GM12878 (cell line): ENCODE measurements at regions of chr6 and their contacts with region 1.

Region 1: GRCh38 chr6:26270903-26271667 is 93.9 kb upstream of the BTN3A2 start:
- DNase-seq: peak; percentile 98
- ATAC-seq: peak; percentile 57
- H3K4me3 ChIP-seq: peak overlapping the region; percentile 72
- H3K27ac ChIP-seq: peak overlapping the region; percentile 96
- H3K4me1 ChIP-seq: peaks cover 3% of the 10 kb centered on the region
- H3K27me3 ChIP-seq: no peaks in the 10 kb centered on the region
- CTCF ChIP-seq: no peak
- EP300 ChIP-seq: no peak
- POLR2A ChIP-seq: peak; percentile 95
- RAD21 ChIP-seq: no peak

Region 2: DNA sequence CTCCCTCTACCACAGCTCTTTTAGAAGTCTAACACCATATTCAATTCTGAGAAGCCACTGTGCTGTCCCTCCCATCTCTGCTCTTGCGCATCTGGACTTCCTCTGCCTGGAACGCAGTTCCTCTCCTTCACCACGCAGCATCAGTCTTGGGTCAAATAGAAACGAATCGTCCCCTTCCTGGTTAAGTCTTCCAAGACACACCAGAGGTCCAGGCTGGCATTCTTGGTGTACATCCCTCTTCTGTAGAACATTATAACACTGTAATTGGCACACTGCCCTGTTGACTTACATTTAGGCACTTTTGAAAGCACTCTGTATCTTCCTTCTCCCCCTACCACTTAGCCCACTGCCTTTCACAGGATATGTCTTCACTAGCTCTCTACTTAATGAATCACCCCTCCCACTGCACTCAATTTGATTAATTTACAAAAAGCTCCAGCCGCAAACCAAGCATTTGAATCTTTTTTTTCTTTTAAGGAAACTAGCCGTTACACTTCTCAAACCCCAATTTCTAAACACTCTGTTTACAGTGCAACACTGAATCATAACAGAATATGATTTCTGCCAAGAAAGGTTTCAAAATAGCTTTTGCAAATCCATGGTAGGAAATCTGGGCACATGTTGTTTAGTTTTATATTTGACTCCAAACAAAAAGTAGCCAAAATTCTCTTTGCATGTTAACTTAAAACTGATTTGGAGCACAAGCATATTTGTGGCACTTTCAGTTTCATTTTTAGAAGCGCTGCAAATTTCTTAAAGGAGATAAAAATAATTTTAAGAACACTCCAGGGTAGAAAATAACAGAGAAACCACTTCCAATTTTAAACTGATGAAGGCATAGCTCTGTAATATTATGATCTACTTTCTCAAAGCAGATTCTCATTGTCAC is 1132.6 kb before region 1 on chr6:
- CTCF ChIA-PET with region 1: no interaction called
- POLR2A ChIA-PET with region 1: no interaction called
- RAD21 ChIA-PET with region 1: no interaction called
- SMC1A ChIA-PET with region 1: no interaction called
- in situ Hi-C with region 1: no loop called
- intact Hi-C with region 1: no loop called
- DNase-seq: peak; percentile 81
- ATAC-seq: peak; percentile 95
- H3K4me3 ChIP-seq: peak overlapping the region; percentile 74
- H3K27ac ChIP-seq: peak overlapping the region; percentile 98
- H3K4me1 ChIP-seq: peaks cover 7% of the 10 kb centered on the region
- H3K27me3 ChIP-seq: no peaks in the 10 kb centered on the region
- CTCF ChIP-seq: peak; percentile 6 to 39 (median 25); a peak in 2 of 6 replicates
- EP300 ChIP-seq: peak; percentile 24 to 32; a peak in 1 of 4 replicates
- POLR2A ChIP-seq: peak; percentile 80
- RAD21 ChIP-seq: peak; percentile 46

Region 3: GRCh38 chr6:26122793-26123674 is 148.1 kb before region 1 on chr6:
- CTCF ChIA-PET with region 1: no interaction called
- POLR2A ChIA-PET with region 1: interaction called, 8 read pairs
- RAD21 ChIA-PET with region 1: interaction called, 3 read pairs
- SMC1A ChIA-PET with region 1: no interaction called
- in situ Hi-C with region 1: no loop called
- intact Hi-C with region 1: loop called (anchors 2 kb)
- DNase-seq: peak; percentile 99
- ATAC-seq: peak; percentile 71
- H3K4me3 ChIP-seq: peak overlapping the region; percentile 65
- H3K27ac ChIP-seq: peak overlapping the region; percentile 95
- H3K4me1 ChIP-seq: peaks cover 3% of the 10 kb centered on the region; the same call in 1 of the 2 replicates
- H3K27me3 ChIP-seq: no peaks in the 10 kb centered on the region
- CTCF ChIP-seq: no peak
- EP300 ChIP-seq: peak; percentile 85 to 93; a peak in 3 of 4 replicates
- POLR2A ChIP-seq: peak; percentile 86
- RAD21 ChIP-seq: no peak

Region 4: GRCh38 chr6:26204332-26205165 is 66.5 kb before region 1 on chr6:
- CTCF ChIA-PET with region 1: interaction called, 3 read pairs
- POLR2A ChIA-PET with region 1: interaction called, 16 read pairs
- RAD21 ChIA-PET with region 1: interaction called, 5 read pairs
- SMC1A ChIA-PET with region 1: interaction called, 15 read pairs
- in situ Hi-C with region 1: no loop called
- intact Hi-C with region 1: loop called (anchors 2 kb)
- DNase-seq: peak; percentile 97
- ATAC-seq: peak; percentile 76
- H3K4me3 ChIP-seq: peak overlapping the region; percentile 72
- H3K27ac ChIP-seq: peak overlapping the region; percentile 96
- H3K4me1 ChIP-seq: peaks cover 14% of the 10 kb centered on the region
- H3K27me3 ChIP-seq: no peaks in the 10 kb centered on the region
- CTCF ChIP-seq: peak; percentile 23 to 49 (median 25); a peak in 4 of 6 replicates
- EP300 ChIP-seq: peak; percentile 68 to 86; a peak in 3 of 4 replicates
- POLR2A ChIP-seq: peak; percentile 91
- RAD21 ChIP-seq: 0 out of 2 replicates have a peak, but pooled peaks have one; percentile 5

Region 5: DNA sequence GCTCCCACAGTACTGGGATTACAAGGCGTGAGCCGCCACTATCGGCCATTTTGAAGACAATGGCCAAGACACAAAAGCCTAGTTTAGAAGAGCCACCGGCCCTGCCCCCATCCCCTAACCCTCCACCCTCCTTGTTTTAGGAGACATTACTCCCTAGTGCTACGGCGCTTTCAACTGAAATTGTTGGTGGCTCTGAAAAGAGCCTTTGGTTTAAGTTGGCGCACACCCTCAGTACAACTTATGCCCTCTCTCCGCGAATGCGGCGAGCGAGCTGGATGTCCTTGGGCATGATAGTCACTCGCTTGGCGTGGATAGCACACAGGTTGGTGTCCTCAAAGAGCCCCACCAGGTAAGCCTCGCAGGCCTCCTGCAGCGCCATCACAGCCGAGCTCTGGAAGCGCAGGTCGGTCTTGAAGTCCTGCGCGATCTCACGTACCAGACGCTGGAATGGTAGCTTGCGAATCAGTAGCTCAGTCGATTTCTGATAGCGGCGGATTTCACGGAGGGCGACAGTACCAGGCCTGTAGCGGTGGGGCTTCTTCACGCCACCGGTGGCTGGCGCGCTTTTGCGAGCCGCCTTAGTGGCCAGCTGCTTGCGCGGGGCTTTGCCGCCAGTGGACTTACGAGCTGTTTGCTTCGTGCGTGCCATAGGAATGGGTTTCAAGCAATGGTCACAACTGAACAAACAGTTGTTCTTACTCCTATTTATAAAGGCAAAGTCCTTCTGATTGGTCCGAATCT is 21.0 kb before region 1 on chr6:
- CTCF ChIA-PET with region 1: interaction called, 131 read pairs
- POLR2A ChIA-PET with region 1: interaction called, 86 read pairs
- RAD21 ChIA-PET with region 1: interaction called, 43 read pairs
- SMC1A ChIA-PET with region 1: interaction called, 8 read pairs
- in situ Hi-C with region 1: no loop called
- intact Hi-C with region 1: loop called (anchors 1 kb)
- DNase-seq: peak; percentile 97
- ATAC-seq: peak; percentile 64
- H3K4me3 ChIP-seq: peak overlapping the region; percentile 76
- H3K27ac ChIP-seq: peak overlapping the region; percentile 91
- H3K4me1 ChIP-seq: no peaks in the 10 kb centered on the region; the same call in 1 of the 2 replicates
- H3K27me3 ChIP-seq: no peaks in the 10 kb centered on the region
- CTCF ChIP-seq: peak; percentile 56 to 67 (median 65)
- EP300 ChIP-seq: no peak
- POLR2A ChIP-seq: peak; percentile 97
- RAD21 ChIP-seq: 0 out of 2 replicates have a peak, but pooled peaks have one; percentile 22

Region 6: DNA sequence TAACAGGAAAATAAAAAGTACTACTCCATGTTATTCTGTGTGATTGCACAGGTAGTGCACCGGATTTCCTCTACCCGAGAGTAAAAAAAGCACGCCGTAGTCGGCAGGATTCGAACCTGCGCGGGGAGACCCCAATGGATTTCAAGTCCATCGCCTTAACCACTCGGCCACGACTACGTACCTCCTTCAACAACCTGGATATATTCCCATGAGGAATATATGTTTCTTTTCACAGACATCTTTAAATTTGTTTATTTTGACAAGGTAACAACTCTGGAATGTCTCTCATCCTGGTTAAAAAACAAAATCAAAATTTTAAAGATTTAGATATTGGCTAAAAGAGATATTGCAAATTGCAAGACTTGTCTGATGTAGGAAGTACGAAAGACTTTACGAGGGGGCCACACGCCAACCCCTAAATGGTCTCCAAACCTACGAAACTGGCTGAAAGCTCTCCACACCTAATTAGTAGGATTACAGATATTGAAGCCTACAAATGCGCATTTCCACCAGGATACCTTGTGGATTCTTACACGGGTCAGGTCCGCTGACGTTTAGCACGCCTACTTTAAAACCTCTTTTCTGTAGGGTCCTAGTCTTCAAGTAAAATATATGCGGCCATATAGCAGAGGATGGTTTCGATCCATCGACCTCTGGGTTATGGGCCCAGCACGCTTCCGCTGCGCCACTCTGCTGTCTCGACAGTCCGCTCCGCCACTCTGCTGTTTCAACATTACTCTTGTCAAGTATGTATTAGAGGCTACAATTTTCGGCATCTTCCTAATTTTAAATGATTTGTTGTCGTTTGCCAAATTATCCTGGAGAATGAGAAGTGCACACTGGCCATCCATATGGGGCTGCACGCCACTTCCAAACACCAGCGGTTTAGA is 41.7 kb after region 1 on chr6:
- CTCF ChIA-PET with region 1: interaction called, 3 read pairs
- POLR2A ChIA-PET with region 1: interaction called, 5 read pairs
- RAD21 ChIA-PET with region 1: interaction called, 14 read pairs
- SMC1A ChIA-PET with region 1: interaction called, 6 read pairs
- in situ Hi-C with region 1: no loop called
- intact Hi-C with region 1: loop called (anchors 5 kb)
- DNase-seq: no peak
- ATAC-seq: peak; percentile 72
- H3K4me3 ChIP-seq: peak overlapping the region; percentile 80
- H3K27ac ChIP-seq: peak overlapping the region; percentile 66
- H3K4me1 ChIP-seq: peaks cover 14% of the 10 kb centered on the region
- H3K27me3 ChIP-seq: no peaks in the 10 kb centered on the region
- CTCF ChIP-seq: no peak
- EP300 ChIP-seq: peak in 1 of 2 experiments; percentile 61; a peak in 1 of 4 replicates
- POLR2A ChIP-seq: no peak
- RAD21 ChIP-seq: no peak